OCI-LY7 (cell line): ENCODE measurements at regions of chr20 and their contacts with region 1.

Region 1: GRCh38 chr20:37527638-37528441 is at the start of gene BLCAP:
- DNase-seq: peak; percentile 94
- H3K4me3 ChIP-seq: peak within 1 kb of the TSS; percentile 81
- H3K27ac ChIP-seq: peak within 1 kb of the TSS; percentile 62
- H3K4me1 ChIP-seq: peaks cover 27% of the 10 kb centered on the region
- CTCF ChIP-seq: no peak; the same call in 1 of the 2 replicates
- total RNA-seq, gene BLCAP: 25.1 and 32.3 TPM in 2 replicates

Region 2: GRCh38 chr20:37192137-37192854 is 335.5 kb before region 1 on chr20:
- CTCF ChIA-PET with region 1: no interaction called
- POLR2A ChIA-PET with region 1: no interaction called
- intact Hi-C with region 1: loop called (anchors 5 kb)
- DNase-seq: peak; percentile 73
- H3K4me3 ChIP-seq: no peak overlapping the region
- H3K27ac ChIP-seq: no peak overlapping the region
- H3K4me1 ChIP-seq: peaks cover 28% of the 10 kb centered on the region
- CTCF ChIP-seq: peak; percentile 92

Region 3: GRCh38 chr20:37270576-37271420 is 257.0 kb before region 1 on chr20:
- CTCF ChIA-PET with region 1: no interaction called
- POLR2A ChIA-PET with region 1: interaction called, 3 read pairs
- intact Hi-C with region 1: loop called (anchors 2 kb)
- DNase-seq: no peak
- H3K4me3 ChIP-seq: no peak overlapping the region
- H3K27ac ChIP-seq: no peak overlapping the region
- H3K4me1 ChIP-seq: peaks cover 51% of the 10 kb centered on the region
- CTCF ChIP-seq: no peak

Region 4: DNA sequence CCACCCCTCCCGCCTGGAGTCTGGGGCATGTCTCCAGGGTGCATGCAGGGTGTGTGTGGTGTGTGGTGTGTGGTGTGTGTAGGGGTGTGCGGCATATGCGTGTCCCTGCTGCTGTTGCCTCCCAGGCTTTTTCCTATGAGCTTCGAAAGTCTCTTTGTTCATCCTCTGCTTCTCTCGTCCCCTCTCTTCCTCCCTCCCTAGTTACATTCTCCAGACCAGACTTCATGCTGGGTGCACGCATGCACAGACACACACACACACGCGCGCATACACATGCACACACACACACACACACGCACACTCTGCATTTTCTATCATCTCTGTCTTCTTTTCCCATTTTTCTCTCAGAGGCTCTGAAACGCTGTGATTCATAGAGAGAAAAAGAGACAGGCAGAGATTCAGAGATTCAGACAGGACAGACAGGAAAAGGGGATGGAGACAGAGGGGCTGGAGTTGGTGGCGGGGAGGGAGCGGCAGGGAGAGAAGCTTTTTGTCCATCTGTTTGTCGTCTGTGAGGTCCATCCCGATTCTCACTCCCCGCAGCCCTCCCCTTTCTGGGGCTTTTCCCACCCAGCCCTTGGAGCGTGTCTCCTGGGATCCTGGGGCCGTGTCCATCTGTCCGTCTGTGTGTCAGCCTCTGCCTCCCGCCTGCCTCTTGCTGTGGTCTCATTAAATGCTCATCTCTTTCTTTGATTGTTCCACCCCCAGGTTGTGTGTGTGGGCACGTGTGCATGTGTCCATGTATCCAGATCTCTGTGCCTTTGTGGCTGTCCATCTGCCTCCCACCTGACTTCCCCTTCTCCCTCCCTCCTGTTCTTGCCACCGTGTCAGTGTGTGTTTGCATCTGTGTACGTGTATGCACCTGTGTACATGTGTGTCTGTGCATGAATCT is 119.3 kb before region 1 on chr20:
- CTCF ChIA-PET with region 1: no interaction called
- POLR2A ChIA-PET with region 1: no interaction called
- intact Hi-C with region 1: loop called (anchors 1 kb)
- DNase-seq: peak; percentile 16
- H3K4me3 ChIP-seq: no peak overlapping the region
- H3K27ac ChIP-seq: no peak overlapping the region
- H3K4me1 ChIP-seq: peaks cover 29% of the 10 kb centered on the region
- CTCF ChIP-seq: no peak

Region 5: DNA sequence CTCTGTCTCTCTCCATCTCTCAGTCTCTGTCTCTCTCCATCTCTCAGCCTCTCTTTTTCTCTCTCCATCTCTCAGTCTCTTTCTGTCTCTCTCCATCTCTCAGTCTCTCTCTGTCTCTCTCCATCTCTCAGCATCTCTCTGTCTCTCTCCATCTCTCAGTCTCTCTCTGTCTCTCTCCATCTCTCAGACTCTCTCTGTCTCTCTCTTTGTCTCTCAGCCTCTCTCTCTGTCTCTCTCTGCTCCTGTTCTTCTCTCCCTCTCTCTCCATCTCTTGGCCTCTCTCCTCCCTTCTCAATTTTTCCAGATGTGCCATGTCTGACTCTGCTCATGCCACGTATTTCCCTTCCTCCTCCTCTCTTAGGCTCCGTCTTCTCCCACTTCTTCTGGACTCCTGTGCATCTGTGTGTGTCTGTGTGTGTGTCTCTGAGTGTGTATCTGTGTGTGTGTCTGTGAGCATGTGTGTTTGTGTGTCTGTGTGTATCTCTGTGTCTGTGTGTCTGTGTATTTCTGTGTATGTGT is 109.2 kb before region 1 on chr20:
- CTCF ChIA-PET with region 1: no interaction called
- POLR2A ChIA-PET with region 1: no interaction called
- intact Hi-C with region 1: no loop called
- DNase-seq: no peak
- H3K4me3 ChIP-seq: no peak overlapping the region
- H3K27ac ChIP-seq: no peak overlapping the region
- H3K4me1 ChIP-seq: no peaks in the 10 kb centered on the region
- CTCF ChIP-seq: no peak

Region 6: DNA sequence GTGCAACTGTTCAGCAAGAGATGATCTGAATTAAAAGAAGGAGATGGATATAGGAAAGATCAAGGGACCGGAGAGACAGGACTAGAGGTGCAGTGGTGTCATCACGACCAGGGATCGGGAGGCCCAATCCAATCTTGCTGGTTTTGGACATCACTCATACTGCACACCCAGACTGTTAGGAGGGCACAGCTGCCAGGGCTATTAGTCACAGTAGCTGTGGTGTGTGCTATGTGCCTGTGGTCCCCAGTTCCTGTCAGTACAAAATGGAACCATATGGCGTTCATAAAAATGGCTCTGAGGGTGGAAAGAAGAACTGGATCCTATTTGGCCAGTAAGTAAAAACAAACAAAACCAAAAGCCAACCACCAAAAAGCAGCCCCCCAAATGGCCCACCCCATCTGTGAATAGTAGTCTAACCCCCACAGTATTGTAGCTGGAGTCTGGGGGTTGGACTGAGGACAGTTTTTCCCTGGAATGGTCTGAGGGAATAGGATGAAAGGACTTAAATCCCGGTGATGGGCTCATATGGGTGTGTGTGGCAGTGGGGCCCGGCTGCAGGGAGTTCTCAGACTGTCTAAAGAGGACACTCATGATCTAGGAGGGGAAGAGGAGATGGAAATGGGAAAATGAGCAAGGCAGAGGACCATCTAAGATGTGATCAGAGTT is 16.1 kb before region 1 on chr20:
- CTCF ChIA-PET with region 1: no interaction called
- POLR2A ChIA-PET with region 1: interaction called, 3 read pairs
- intact Hi-C with region 1: loop called (anchors 1 kb)
- DNase-seq: no peak
- H3K4me3 ChIP-seq: no peak overlapping the region
- H3K27ac ChIP-seq: no peak overlapping the region
- H3K4me1 ChIP-seq: peaks cover 21% of the 10 kb centered on the region
- CTCF ChIP-seq: no peak